ENCODE measurements at regions of chr17 and their contacts with region 1.

Region 1: GRCh38 chr17:8997994-8998628 is 23.2 kb upstream of the NTN1 start:
- DNase-seq: peak; percentile 84
- H3K4me3 Mint-ChIP-seq: no peak overlapping the region
- H3K27ac Mint-ChIP-seq: peak overlapping the region; percentile 26
- H3K4me1 Mint-ChIP-seq: peaks cover 9% of the 10 kb centered on the region
- H3K27me3 Mint-ChIP-seq: peaks cover 23% of the 10 kb centered on the region

Region 2: DNA sequence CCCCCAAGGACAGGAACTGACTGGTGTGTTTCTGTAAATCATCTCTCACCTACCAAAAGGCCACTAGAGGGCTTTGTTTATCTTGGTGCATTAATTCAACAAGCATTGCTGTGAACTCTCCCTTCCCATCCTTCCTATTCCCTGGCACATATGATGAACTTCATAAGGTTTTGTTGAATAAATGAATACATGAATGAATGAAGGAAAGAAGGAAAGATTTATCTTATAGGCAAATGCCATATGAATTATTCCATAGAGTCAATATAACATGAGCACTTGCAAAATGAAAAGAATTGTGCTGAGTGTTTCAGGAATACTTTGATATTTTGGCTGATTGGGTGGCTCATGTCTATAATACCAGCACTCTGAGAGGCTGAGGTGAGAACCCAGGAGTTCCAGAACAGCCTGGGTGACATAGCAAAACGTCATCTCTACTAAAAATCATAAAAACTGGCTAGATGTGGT is 244.1 kb before region 1 on chr17:
- CTCF ChIA-PET with region 1: no interaction called
- POLR2A ChIA-PET with region 1: no interaction called
- intact Hi-C with region 1: loop called (anchors 5 kb)
- DNase-seq: no peak
- H3K4me3 Mint-ChIP-seq: no peak overlapping the region
- H3K27ac Mint-ChIP-seq: no peak overlapping the region
- H3K4me1 Mint-ChIP-seq: no peaks in the 10 kb centered on the region
- H3K27me3 Mint-ChIP-seq: peaks cover 8% of the 10 kb centered on the region

Region 3: DNA sequence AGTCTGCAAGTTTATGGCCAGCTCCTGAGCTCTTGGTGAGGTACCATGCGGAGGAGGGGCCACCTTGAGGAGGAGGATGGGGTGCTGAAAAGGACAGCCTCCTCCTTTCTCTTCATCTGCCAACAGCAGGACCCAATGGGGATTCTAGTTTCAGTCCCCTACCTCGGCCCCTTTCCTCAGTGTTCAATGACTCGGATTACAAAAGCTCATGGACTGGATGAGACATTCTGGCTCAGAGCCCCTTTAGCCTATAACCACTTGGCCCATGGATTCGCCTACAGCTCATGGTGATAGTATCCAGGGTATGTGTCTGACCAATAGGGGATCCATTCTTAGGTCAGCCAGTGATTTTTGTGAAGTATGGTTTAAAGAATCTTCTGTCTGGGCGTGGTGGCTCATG is 122.2 kb before region 1 on chr17:
- CTCF ChIA-PET with region 1: no interaction called
- POLR2A ChIA-PET with region 1: no interaction called
- intact Hi-C with region 1: no loop called
- DNase-seq: no peak
- H3K4me3 Mint-ChIP-seq: no peak overlapping the region
- H3K27ac Mint-ChIP-seq: no peak overlapping the region
- H3K4me1 Mint-ChIP-seq: no peaks in the 10 kb centered on the region
- H3K27me3 Mint-ChIP-seq: no peaks in the 10 kb centered on the region

Region 4: DNA sequence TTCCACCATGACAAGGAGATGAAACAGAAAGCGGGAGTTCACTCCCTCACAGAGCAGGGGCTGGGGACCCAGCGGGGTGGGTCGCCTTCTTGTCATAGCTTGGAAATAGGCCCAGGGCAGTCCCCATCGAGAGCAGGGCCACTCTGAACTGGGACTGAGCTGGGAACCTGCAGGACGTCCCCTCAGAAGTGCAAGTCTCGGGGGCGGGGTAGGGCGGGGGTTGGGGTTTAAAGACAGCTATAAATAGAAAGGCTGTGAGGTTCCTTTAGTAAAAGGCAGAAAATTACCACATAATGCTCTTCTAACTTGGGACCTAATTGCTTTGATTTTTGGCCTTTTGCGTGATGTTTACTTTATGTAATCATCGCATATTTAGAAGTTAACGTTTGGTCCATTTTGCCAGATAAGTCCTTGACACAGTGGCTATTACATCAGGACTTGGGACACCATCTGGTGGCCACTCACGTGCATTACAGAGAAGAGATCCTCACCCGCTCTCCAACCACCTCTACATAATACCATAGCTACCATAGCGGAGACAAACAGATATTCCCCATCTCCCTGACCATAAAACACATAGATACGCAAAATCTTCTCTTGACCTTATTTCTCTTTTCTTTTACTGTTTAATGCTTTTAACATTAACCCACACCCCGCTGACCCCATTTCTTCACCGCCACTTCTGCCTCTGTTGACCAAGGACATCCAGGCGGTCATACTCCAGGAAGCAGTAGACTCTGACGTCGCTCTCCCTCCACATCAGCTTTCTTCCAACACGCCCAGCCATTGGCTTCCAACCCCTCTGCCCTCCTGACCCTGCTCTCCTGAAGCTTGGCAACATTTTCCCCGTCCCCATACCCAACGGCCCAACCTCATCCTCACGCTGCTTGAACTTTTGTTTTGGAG is 103.2 kb before region 1 on chr17:
- CTCF ChIA-PET with region 1: interaction called, 38 read pairs
- POLR2A ChIA-PET with region 1: interaction called, 3 read pairs
- intact Hi-C with region 1: loop called (anchors 1 kb)
- DNase-seq: peak; percentile 68
- H3K4me3 Mint-ChIP-seq: no peak overlapping the region
- H3K27ac Mint-ChIP-seq: no peak overlapping the region
- H3K4me1 Mint-ChIP-seq: peaks cover 64% of the 10 kb centered on the region
- H3K27me3 Mint-ChIP-seq: no peaks in the 10 kb centered on the region

Region 5: GRCh38 chr17:8965394-8966168 is 32.5 kb before region 1 on chr17 and contains the start of gene PIK3R5:
- CTCF ChIA-PET with region 1: interaction called, 12 read pairs
- POLR2A ChIA-PET with region 1: no interaction called
- intact Hi-C with region 1: no loop called
- DNase-seq: peak; percentile 90
- H3K4me3 Mint-ChIP-seq: peak within 1 kb of the TSS; percentile 88
- H3K27ac Mint-ChIP-seq: peak within 1 kb of the TSS; percentile 80
- H3K4me1 Mint-ChIP-seq: peaks cover 48% of the 10 kb centered on the region
- H3K27me3 Mint-ChIP-seq: no peaks in the 10 kb centered on the region
- total RNA-seq, gene PIK3R5: 20.7 to 22.4 TPM

Region 6: DNA sequence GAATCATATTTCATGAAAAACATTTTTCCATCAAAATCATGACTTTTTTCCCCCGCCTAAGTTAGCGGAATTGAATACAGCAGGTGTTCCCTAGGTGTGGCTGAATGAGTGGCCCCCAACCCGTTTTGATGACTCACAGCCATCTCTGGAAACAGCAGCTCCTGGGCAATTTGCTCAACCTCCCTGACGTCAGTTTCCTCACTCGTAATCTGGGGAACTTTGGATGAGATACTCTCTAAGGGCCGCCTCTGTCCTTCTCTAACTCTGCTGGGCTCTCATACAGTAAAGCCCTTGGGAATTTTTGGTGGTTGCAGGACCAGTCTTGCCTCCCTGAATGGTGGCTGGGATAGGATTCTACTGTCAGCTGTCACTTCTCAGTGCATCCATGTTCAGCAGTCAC is 11.6 kb after region 1 on chr17:
- CTCF ChIA-PET with region 1: interaction called, 11 read pairs
- POLR2A ChIA-PET with region 1: no interaction called
- intact Hi-C with region 1: no loop called
- DNase-seq: no peak
- H3K4me3 Mint-ChIP-seq: no peak overlapping the region
- H3K27ac Mint-ChIP-seq: no peak overlapping the region
- H3K4me1 Mint-ChIP-seq: peaks cover 3% of the 10 kb centered on the region
- H3K27me3 Mint-ChIP-seq: peaks cover 46% of the 10 kb centered on the region

Region 7: GRCh38 chr17:9522074-9522473 is 524.0 kb after region 1 on chr17:
- CTCF ChIA-PET with region 1: interaction called, 10 read pairs
- POLR2A ChIA-PET with region 1: no interaction called
- intact Hi-C with region 1: loop called (anchors 5 kb)
- DNase-seq: no peak
- H3K4me3 Mint-ChIP-seq: no peak overlapping the region
- H3K27ac Mint-ChIP-seq: no peak overlapping the region
- H3K4me1 Mint-ChIP-seq: peaks cover 13% of the 10 kb centered on the region
- H3K27me3 Mint-ChIP-seq: no peaks in the 10 kb centered on the region

Measured in activated CD4-positive, alpha-beta memory T cell treated with anti-CD3 and anti-CD28 coated beads for 36 hours (primary cell).